Naive thymus-derived CD4-positive, alpha-beta T cell (primary cell): ENCODE measurements at regions of chr1 and their contacts with region 1.

Region 1: GRCh38 chr1:154479764-154480421 is 22.1 kb upstream of the TDRD10 start:
- DNase-seq: peak in 8 of 9 donors; percentile 39 to 78 (median 66)
- ATAC-seq: peak; percentile 90
- H3K4me3 ChIP-seq: no peak overlapping the region
- H3K4me3 Mint-ChIP-seq: no peak overlapping the region
- H3K27ac ChIP-seq: no peak overlapping the region
- H3K27ac Mint-ChIP-seq: peak overlapping the region in 1 of 9 donors; percentile 0
- H3K4me1 ChIP-seq: peaks cover 0 to 10% of the 10 kb centered on the region in 2 donors
- H3K4me1 Mint-ChIP-seq: peaks cover 12 to 27% (median 19%) of the 10 kb centered on the region in 7 donors
- H3K27me3 ChIP-seq: no peaks in the 10 kb centered on the region
- H3K27me3 Mint-ChIP-seq: peaks cover 0 to 14% (median 0%) of the 10 kb centered on the region in 5 donors

Region 2: DNA sequence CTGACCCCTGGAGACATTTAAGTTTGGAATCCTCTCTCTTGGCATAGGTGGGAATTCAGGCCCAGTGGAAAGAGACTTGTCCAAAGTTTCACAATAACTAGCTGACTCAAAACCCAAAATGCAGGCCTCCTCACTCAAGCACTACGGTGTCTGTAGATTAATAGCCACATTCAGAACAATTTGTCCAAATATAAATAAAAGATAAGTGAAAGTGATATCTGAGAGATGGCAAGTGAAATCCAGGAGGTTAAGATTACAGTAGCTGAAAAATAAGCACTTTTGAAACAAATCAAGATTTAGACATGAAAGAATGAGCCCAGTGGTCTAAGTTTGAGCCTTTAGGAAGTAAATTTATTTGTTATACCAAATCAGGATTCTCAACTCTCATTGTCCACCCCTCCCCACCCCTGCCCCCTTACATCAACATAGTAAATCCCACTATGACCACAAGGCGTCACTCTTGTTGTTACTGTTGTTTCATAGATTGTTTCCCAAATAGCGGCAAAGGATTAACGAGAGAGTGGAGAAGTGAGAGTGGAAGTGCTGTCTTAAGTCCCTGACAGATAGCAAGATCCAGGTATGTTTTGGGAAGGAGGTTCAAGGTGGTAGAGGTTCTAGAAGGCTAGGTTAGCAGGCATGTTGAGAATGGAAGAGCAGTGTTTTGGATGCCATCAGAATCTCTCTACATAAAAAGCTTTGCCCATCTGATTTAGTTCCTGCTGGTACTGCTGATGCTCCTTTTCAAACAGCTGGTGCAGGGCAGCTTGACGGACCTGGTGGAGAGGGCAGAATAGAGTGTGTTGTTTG is 280.9 kb before region 1 on chr1:
- CTCF ChIA-PET with region 1: no interaction called
- POLR2A ChIA-PET with region 1: no interaction called
- intact Hi-C with region 1: loop called in 1 of 2 experiments (anchors 1 kb)
- DNase-seq: peak in 7 of 9 donors; percentile 44 to 66 (median 61)
- ATAC-seq: peak; percentile 91
- H3K4me3 ChIP-seq: no peak overlapping the region
- H3K4me3 Mint-ChIP-seq: no peak overlapping the region
- H3K27ac ChIP-seq: no peak overlapping the region
- H3K27ac Mint-ChIP-seq: peak overlapping the region in 1 of 9 donors; percentile 69
- H3K4me1 ChIP-seq: no peaks in the 10 kb centered on the region
- H3K4me1 Mint-ChIP-seq: peaks cover 0 to 4% (median 0%) of the 10 kb centered on the region in 7 donors
- H3K27me3 ChIP-seq: no peaks in the 10 kb centered on the region
- H3K27me3 Mint-ChIP-seq: peaks cover 0 to 7% (median 0%) of the 10 kb centered on the region in 5 donors

Region 3: DNA sequence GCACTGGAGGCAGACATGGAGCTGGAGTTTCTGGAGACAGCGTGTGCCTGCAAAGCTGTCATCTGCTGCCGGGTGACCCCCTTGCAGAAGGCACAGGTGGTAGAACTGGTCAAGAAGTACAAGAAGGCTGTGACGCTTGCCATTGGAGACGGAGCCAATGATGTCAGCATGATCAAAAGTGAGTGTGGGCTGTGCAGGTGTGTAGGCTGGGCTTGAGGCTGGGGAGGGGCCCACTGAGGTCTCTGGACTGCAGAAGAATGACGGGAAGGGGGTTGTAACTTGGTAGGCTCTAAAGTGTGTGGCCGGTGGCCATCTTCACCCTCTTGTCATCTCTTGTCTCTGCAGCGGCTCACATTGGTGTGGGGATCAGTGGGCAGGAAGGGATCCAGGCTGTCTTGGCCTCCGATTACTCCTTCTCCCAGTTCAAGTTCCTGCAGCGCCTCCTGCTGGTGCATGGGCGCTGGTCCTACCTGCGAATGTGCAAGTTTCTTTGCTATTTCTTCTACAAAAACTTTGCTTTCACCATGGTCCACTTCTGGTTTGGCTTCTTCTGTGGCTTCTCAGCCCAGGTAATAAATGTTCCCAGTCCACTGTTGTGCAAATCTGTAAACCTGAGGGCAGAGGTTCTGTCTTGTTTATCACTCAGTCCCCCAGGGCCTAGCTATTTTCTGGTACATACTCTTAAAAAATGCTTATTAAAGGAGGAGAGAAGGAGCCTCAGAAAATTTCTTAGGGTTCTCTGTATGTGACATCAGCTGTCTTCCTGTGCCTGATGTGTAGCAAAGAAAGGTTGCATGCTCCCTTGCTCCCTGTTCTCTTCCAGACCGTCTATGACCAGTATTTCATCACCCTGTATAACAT is 134.7 kb before region 1 on chr1:
- CTCF ChIA-PET with region 1: interaction called, 3 read pairs
- POLR2A ChIA-PET with region 1: interaction called, 3 read pairs
- intact Hi-C with region 1: loop called (anchors 1 to 5 kb)
- DNase-seq: peak; percentile 56 to 79 (median 71)
- ATAC-seq: peak; percentile 55
- H3K4me3 ChIP-seq: peak overlapping the region; percentile 83
- H3K4me3 Mint-ChIP-seq: peak overlapping the region; percentile 79 to 98 (median 92)
- H3K27ac ChIP-seq: peak overlapping the region; percentile 61
- H3K27ac Mint-ChIP-seq: peak overlapping the region; percentile 31 to 100 (median 96)
- H3K4me1 ChIP-seq: peaks cover 60 to 71% of the 10 kb centered on the region in 2 donors
- H3K4me1 Mint-ChIP-seq: peaks cover 64 to 96% (median 73%) of the 10 kb centered on the region in 7 donors
- H3K27me3 ChIP-seq: no peaks in the 10 kb centered on the region
- H3K27me3 Mint-ChIP-seq: no peaks in the 10 kb centered on the region

Region 4: GRCh38 chr1:154442006-154442740 is 37.7 kb before region 1 on chr1:
- CTCF ChIA-PET with region 1: interaction called, 4 read pairs
- POLR2A ChIA-PET with region 1: no interaction called
- intact Hi-C with region 1: loop called in 1 of 2 experiments (anchors 1 kb)
- DNase-seq: no peak
- ATAC-seq: no peak
- H3K4me3 ChIP-seq: peak overlapping the region; percentile 36
- H3K4me3 Mint-ChIP-seq: peak overlapping the region in 9 of 10 donors; percentile 69 to 87 (median 76)
- H3K27ac ChIP-seq: peak overlapping the region; percentile 78
- H3K27ac Mint-ChIP-seq: peak overlapping the region in 8 of 9 donors; percentile 91 to 99 (median 96)
- H3K4me1 ChIP-seq: peaks cover 11 to 69% of the 10 kb centered on the region in 2 donors
- H3K4me1 Mint-ChIP-seq: peaks cover 55 to 82% (median 73%) of the 10 kb centered on the region in 7 donors
- H3K27me3 ChIP-seq: no peaks in the 10 kb centered on the region
- H3K27me3 Mint-ChIP-seq: no peaks in the 10 kb centered on the region

Region 5: GRCh38 chr1:154607609-154608396 is 127.9 kb after region 1 on chr1 and contains the start of gene ADAR:
- CTCF ChIA-PET with region 1: no interaction called
- POLR2A ChIA-PET with region 1: no interaction called
- intact Hi-C with region 1: loop called in 1 of 2 experiments (anchors 5 kb)
- DNase-seq: peak; percentile 67 to 95 (median 90)
- ATAC-seq: peak; percentile 92
- H3K4me3 ChIP-seq: peak within 1 kb of the TSS; percentile 78
- H3K4me3 Mint-ChIP-seq: peak within 1 kb of the TSS; percentile 91 to 100 (median 98)
- H3K27ac ChIP-seq: peak within 1 kb of the TSS; percentile 97
- H3K27ac Mint-ChIP-seq: peak within 1 kb of the TSS; percentile 94 to 99 (median 99)
- H3K4me1 ChIP-seq: peaks cover 40 to 42% of the 10 kb centered on the region in 2 donors
- H3K4me1 Mint-ChIP-seq: peaks cover 63 to 90% (median 75%) of the 10 kb centered on the region in 7 donors
- H3K27me3 ChIP-seq: no peaks in the 10 kb centered on the region
- H3K27me3 Mint-ChIP-seq: no peaks in the 10 kb centered on the region
- total RNA-seq, gene ADAR: 206 to 408 (median 237) TPM

Region 6: GRCh38 chr1:154760469-154760933 is 280.6 kb after region 1 on chr1:
- CTCF ChIA-PET with region 1: interaction called, 6 read pairs
- POLR2A ChIA-PET with region 1: no interaction called
- intact Hi-C with region 1: loop called in 1 of 2 experiments (anchors 1 kb)
- DNase-seq: peak; percentile 73 to 91 (median 83)
- ATAC-seq: peak; percentile 98
- H3K4me3 ChIP-seq: peak overlapping the region; percentile 47
- H3K4me3 Mint-ChIP-seq: peak overlapping the region; percentile 29 to 79 (median 74)
- H3K27ac ChIP-seq: peak overlapping the region; percentile 59
- H3K27ac Mint-ChIP-seq: peak overlapping the region in 5 of 9 donors; percentile 62 to 97 (median 79)
- H3K4me1 ChIP-seq: peaks cover 8 to 24% of the 10 kb centered on the region in 2 donors
- H3K4me1 Mint-ChIP-seq: peaks cover 24 to 47% (median 40%) of the 10 kb centered on the region in 7 donors
- H3K27me3 ChIP-seq: peaks cover 0 to 8% of the 10 kb centered on the region in 2 donors
- H3K27me3 Mint-ChIP-seq: peaks cover 0 to 23% (median 5%) of the 10 kb centered on the region in 5 donors

Region 7: DNA sequence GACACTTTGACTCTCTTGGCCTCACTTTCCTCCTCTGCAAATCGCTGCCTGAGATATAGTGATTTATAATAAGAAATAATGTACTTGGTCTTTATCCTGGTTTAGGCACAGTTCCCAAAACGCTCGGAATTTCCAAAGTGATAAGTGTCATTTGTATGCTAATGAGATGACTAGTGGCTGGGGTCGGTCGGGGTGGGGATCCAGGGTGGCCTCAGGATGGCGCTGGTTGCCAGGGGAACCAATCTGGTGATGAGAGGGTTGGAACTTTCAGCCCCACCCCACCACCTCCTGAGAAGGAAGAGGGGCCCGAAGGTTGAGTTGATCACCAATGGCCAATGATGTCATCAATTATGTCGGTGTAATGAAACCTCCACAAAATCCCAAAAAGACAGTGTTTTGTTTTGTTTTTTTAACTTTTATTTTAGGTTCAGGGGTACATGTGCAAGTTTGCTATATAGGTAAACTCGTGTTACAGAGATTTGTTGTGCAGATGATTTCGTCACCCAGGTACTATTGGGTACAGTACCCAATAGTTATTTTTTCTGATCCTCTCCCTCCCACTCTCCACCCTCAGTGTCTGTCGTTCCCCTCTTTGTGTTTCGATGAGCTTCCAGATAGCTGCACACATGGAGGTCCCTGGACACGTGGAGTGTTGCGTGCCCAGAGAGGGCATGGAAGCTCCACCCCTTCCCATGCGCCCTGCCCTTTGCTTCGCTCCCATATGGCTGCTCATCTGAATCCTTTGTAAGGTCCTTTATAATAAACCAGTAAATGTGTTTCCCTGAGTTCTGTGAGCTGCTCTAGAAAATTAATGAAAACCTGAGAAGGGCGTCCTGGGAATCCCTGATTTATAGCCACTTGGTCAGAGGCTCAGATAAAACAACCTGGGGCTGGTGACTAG is 293.0 kb after region 1 on chr1:
- CTCF ChIA-PET with region 1: no interaction called
- POLR2A ChIA-PET with region 1: no interaction called
- intact Hi-C with region 1: no loop called
- DNase-seq: peak in 2 of 9 donors; percentile 19 to 36
- ATAC-seq: no peak
- H3K4me3 ChIP-seq: no peak overlapping the region
- H3K4me3 Mint-ChIP-seq: no peak overlapping the region
- H3K27ac ChIP-seq: no peak overlapping the region
- H3K27ac Mint-ChIP-seq: peak overlapping the region in 1 of 9 donors; percentile 70
- H3K4me1 ChIP-seq: no peaks in the 10 kb centered on the region
- H3K4me1 Mint-ChIP-seq: peaks cover 0 to 7% (median 0%) of the 10 kb centered on the region in 7 donors
- H3K27me3 ChIP-seq: no peaks in the 10 kb centered on the region
- H3K27me3 Mint-ChIP-seq: peaks cover 0 to 3% (median 0%) of the 10 kb centered on the region in 5 donors

Region 8: DNA sequence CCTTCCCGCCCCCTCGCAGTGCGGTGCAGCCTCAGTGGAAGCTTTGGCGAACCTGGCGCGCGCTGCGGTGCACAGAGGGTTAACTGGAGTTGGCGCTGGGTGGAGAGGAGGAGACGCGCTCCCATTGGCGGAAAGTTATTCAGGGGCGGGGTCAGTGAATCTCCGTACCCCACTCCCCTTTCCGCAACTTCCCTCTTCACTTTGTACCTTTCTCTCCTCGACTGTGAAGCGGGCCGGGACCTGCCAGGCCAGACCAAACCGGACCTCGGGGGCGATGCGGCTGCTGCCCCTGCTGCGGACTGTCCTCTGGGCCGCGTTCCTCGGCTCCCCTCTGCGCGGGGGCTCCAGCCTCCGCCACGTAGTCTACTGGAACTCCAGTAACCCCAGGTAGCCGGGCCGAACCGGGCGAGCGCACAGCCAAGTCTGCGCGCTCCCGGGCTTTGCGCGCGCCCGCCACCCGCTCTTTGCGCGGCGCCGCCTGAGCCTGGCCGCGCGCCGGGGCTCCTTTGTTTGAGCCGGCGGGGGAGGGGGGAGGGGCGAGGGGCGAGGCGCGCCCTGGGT is 583.7 kb after region 1 on chr1 and contains the start of gene EFNA4:
- CTCF ChIA-PET with region 1: interaction called, 3 read pairs
- POLR2A ChIA-PET with region 1: no interaction called
- intact Hi-C with region 1: loop called (anchors 2 to 5 kb)
- DNase-seq: peak; percentile 62 to 87 (median 86)
- ATAC-seq: peak; percentile 93
- H3K4me3 ChIP-seq: peak within 1 kb of the TSS; percentile 76
- H3K4me3 Mint-ChIP-seq: peak within 1 kb of the TSS; percentile 85 to 99 (median 95)
- H3K27ac ChIP-seq: peak within 1 kb of the TSS; percentile 69
- H3K27ac Mint-ChIP-seq: peak within 1 kb of the TSS; percentile 17 to 96 (median 83)
- H3K4me1 ChIP-seq: peaks cover 20 to 21% of the 10 kb centered on the region in 2 donors
- H3K4me1 Mint-ChIP-seq: peaks cover 21 to 42% (median 39%) of the 10 kb centered on the region in 7 donors
- H3K27me3 ChIP-seq: no peaks in the 10 kb centered on the region
- H3K27me3 Mint-ChIP-seq: no peaks in the 10 kb centered on the region
- total RNA-seq, gene EFNA4: 3.9 to 9.4 (median 7.7) TPM